MCF 10A (cell line): ENCODE measurements at regions of chr20 and their contacts with region 1.

Region 1: GRCh38 chr20:1718604-1719384 is 61.2 kb upstream of the SIRPG start:
- DNase-seq: peak; percentile 98
- H3K4me3 Mint-ChIP-seq: peak overlapping the region; percentile 4
- H3K27ac Mint-ChIP-seq: peak overlapping the region; percentile 37
- H3K4me1 Mint-ChIP-seq: peaks cover 22% of the 10 kb centered on the region
- H3K27me3 Mint-ChIP-seq: no peaks in the 10 kb centered on the region
- CTCF ChIP-seq: no peak

Region 2: DNA sequence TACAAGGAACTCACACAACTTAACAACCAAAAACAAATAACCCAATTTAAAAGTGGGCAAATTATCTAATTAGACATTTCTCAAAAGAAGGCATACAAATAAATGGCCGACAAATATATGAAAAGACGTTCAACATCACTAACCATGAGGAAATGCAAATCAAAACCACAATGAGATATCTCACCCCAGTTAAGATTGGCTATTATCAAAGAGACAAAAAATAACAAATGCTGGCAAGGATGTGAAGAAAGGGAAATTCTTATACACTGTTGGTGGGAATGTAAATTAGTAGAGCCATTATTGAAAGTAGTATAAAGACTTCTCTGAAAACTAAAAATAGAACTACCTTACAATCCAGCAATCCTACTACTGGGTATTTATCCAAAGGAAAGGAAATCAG is 35.5 kb after region 1 on chr20:
- CTCF ChIA-PET with region 1: no interaction called
- POLR2A ChIA-PET with region 1: no interaction called
- intact Hi-C with region 1: no loop called
- DNase-seq: no peak
- H3K4me3 Mint-ChIP-seq: no peak overlapping the region
- H3K27ac Mint-ChIP-seq: no peak overlapping the region
- H3K4me1 Mint-ChIP-seq: peaks cover 9% of the 10 kb centered on the region
- H3K27me3 Mint-ChIP-seq: no peaks in the 10 kb centered on the region
- CTCF ChIP-seq: no peak

Region 3: DNA sequence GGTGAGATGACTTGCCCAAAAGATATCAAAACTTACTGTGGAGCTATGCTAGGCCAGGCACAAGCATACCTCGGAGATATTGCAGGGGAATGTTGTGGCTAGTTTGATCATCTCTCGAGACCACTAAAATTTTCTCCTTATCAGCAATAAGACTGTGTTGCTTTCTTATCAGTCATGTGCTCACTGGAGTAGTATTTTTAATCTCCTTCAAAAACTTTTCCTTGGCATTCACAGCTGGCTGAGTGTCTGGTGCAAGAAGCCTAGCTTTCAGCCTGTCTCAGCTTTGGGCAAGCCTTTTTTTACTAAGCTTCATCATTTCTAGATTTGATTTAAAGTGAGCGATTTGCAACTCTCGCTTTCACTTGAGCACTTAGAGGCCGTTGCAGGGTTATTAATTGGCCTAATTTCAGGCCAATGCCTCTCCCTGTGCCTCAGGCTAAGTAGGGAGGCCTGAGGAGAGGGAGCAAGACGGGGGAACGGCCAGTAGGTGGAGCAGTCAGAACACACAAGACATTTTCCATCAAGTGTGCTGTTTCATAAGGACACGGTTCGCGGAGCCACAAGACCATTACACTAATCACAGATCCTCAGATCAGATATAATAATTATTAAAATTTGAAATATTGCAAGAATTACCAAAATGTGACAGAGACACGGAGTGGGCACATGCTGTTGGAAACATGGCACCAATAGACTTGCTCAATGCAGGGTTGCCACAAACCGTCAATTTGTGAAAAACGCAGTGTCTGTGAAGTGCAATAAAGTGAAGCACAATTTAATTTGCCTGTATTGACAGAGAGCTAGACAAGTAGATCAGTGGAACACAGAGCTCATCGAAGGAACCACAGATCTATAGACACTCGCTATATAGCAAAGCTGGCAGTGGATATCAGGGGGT is 45.6 kb after region 1 on chr20:
- CTCF ChIA-PET with region 1: interaction called, 4 read pairs
- POLR2A ChIA-PET with region 1: interaction called, 6 read pairs
- intact Hi-C with region 1: loop called (anchors 5 kb)
- DNase-seq: peak; percentile 84
- H3K4me3 Mint-ChIP-seq: no peak overlapping the region
- H3K27ac Mint-ChIP-seq: no peak overlapping the region
- H3K4me1 Mint-ChIP-seq: peaks cover 10% of the 10 kb centered on the region
- H3K27me3 Mint-ChIP-seq: no peaks in the 10 kb centered on the region
- CTCF ChIP-seq: peak; percentile 54

Region 4: GRCh38 chr20:1841554-1842140 is 122.9 kb after region 1 on chr20:
- CTCF ChIA-PET with region 1: no interaction called
- POLR2A ChIA-PET with region 1: no interaction called
- intact Hi-C with region 1: no loop called
- DNase-seq: peak; percentile 74
- H3K4me3 Mint-ChIP-seq: no peak overlapping the region
- H3K27ac Mint-ChIP-seq: no peak overlapping the region
- H3K4me1 Mint-ChIP-seq: no peaks in the 10 kb centered on the region
- H3K27me3 Mint-ChIP-seq: no peaks in the 10 kb centered on the region
- CTCF ChIP-seq: no peak